HCT116 (cell line): ENCODE measurements at regions of chr15 and their contacts with region 1.

Region 1: DNA sequence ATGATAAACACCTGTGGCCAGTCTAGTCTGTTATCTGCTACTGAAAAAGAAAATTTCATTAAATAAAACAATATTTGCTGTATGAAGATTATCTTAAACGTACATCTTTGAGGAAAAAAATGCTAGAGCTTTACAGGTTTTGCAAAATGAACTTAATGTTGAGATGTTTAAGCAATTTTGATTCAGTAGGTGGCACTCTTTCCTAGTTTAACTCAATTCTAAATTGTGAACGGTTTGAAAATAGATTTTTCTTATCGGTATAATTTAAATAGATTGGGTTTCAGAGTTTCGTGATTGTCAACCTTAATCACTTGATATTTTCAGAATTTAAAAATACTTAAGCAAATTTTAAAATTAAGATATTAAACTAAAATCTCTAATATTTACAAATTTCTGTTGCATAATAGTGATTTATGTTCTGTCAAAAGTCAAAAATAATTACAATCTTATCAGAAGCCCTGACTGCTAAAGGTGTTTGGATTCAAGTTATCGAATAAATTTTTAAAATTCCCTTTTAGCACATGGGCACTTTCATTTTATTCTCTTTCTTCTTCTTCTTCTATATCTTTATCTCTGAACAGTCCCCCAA is 7.0 kb upstream of the RNF111 start:
- DNase-seq: peak; percentile 32
- ATAC-seq: no peak
- H3K4me3 ChIP-seq: no peak overlapping the region
- H3K27ac ChIP-seq: no peak overlapping the region
- H3K4me1 ChIP-seq: no peaks in the 10 kb centered on the region
- H3K27me3 ChIP-seq: no peaks in the 10 kb centered on the region
- CTCF ChIP-seq: peak; percentile 42 to 61 (median 61)
- POLR2A ChIP-seq: no peak
- RAD21 ChIP-seq: peak; percentile 73

Region 2: DNA sequence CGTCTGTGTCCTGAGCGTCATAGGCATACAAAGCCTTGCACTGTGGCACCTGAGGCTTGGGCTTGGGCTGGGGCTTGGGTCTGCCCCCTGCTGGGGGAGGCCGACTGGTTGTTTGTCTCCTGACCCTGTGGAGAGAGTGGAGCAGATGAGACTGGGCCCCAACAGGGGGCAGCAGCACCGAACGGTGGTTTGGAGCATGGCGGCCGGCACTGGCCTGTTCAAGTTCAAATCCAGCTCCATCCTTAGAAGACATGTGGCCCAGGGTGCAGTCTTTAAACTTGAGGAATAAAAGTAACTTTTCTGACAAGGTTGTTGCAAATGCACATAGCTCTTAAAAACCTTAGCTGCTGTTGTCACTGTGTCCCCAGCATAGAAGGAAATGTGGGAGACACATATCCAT is 157.8 kb after region 1 on chr15:
- CTCF ChIA-PET with region 1: interaction called, 6 read pairs
- POLR2A ChIA-PET with region 1: no interaction called
- RAD21 ChIA-PET with region 1: no interaction called
- intact Hi-C with region 1: loop called (anchors 1 kb)
- DNase-seq: peak; percentile 46
- ATAC-seq: peak; percentile 95
- H3K4me3 ChIP-seq: no peak overlapping the region
- H3K27ac ChIP-seq: no peak overlapping the region
- H3K4me1 ChIP-seq: peaks cover 0 to 6% of the 10 kb centered on the region in 2 experiments; a peak in 1 of 4 replicates
- H3K27me3 ChIP-seq: no peaks in the 10 kb centered on the region
- CTCF ChIP-seq: peak; percentile 90 to 97 (median 92)
- POLR2A ChIP-seq: no peak
- RAD21 ChIP-seq: peak; percentile 61

Region 3: GRCh38 chr15:59274126-59274970 is 293.9 kb after region 1 on chr15:
- CTCF ChIA-PET with region 1: no interaction called
- POLR2A ChIA-PET with region 1: no interaction called
- RAD21 ChIA-PET with region 1: no interaction called
- intact Hi-C with region 1: no loop called
- DNase-seq: no peak
- ATAC-seq: no peak
- H3K4me3 ChIP-seq: peak overlapping the region in 1 of 2 experiments; percentile 4; a peak in 2 of 4 replicates
- H3K27ac ChIP-seq: peak overlapping the region; percentile 45
- H3K4me1 ChIP-seq: peaks cover 62 to 96% of the 10 kb centered on the region in 2 experiments
- H3K27me3 ChIP-seq: no peaks in the 10 kb centered on the region
- CTCF ChIP-seq: no peak
- POLR2A ChIP-seq: no peak
- RAD21 ChIP-seq: no peak